ENCODE measurements at regions of chr14 and their contacts with region 1.

Region 1: GRCh38 chr14:74493343-74494261 is at the start of gene ISCA2:
- DNase-seq: peak; percentile 100
- H3K4me3 ChIP-seq: peak within 1 kb of the TSS; percentile 97
- H3K27ac ChIP-seq: peak within 1 kb of the TSS; percentile 84
- H3K4me1 ChIP-seq: peaks cover 23% of the 10 kb centered on the region
- H3K27me3 ChIP-seq: no peaks in the 10 kb centered on the region
- CTCF ChIP-seq: no peak
- total RNA-seq, gene ISCA2: 25.5 and 26.3 TPM in 2 replicates

Region 2: DNA sequence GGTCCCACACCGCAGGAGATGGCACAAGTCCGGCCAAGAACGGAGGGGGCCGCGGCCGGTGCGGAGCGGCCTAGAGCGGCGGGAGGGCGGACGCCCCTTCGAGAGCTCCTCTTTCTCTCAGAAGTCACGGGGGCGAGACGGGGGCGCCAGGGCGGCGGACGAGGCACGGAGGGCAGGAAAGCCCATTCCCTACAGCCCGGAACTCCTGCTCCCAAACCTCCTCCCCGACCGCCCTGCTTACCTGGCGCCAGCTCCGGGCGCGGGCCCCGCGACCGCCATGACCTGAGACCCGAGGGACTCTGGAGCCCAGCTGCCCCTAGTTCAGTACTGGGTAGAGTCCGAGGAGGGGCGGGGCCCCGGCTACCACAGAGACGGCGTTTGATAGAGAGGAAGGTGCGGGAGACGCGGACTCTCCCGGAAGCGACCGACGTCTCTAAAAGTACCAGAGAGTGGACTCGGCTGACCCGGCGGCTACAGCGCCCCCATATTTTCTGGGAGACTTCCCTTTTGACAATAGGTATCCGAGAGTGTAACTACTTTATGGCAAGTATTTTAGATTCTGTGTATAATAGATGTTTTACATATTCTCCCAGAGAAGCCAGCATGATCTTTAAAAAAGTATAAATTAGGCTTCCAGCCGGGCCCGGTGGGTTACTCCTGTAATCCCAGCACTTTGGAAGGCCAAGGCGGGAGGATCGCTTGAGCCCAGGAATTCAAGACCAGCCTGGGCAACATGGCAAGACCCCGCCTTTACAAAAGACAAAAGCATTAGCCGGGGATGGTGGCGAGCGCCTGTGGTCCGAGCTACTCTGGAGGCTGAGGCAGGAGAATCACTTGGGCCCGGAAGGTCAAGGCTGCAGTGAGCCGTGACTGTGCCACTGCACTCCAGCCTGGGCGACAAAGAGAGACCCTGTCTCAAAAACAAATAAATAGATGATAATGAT is 190.7 kb before region 1 on chr14 and contains the start of gene ABCD4:
- CTCF ChIA-PET with region 1: interaction called, 13 read pairs
- POLR2A ChIA-PET with region 1: no interaction called
- intact Hi-C with region 1: no loop called
- DNase-seq: peak; percentile 95
- H3K4me3 ChIP-seq: peak within 1 kb of the TSS; percentile 83
- H3K27ac ChIP-seq: peak within 1 kb of the TSS; percentile 81
- H3K4me1 ChIP-seq: peaks cover 5% of the 10 kb centered on the region
- H3K27me3 ChIP-seq: no peaks in the 10 kb centered on the region
- CTCF ChIP-seq: peak; percentile 82
- total RNA-seq, gene ABCD4: 46.7 and 55.7 TPM in 2 replicates

Region 3: GRCh38 chr14:74362361-74362915 is 131.2 kb before region 1 on chr14:
- CTCF ChIA-PET with region 1: no interaction called
- POLR2A ChIA-PET with region 1: no interaction called
- intact Hi-C with region 1: loop called (anchors 5 kb)
- DNase-seq: peak; percentile 84
- H3K4me3 ChIP-seq: no peak overlapping the region
- H3K27ac ChIP-seq: no peak overlapping the region
- H3K4me1 ChIP-seq: no peaks in the 10 kb centered on the region
- H3K27me3 ChIP-seq: peaks cover 9% of the 10 kb centered on the region
- CTCF ChIP-seq: peak; percentile 91

Region 4: GRCh38 chr14:74514471-74514941 is 20.9 kb after region 1 on chr14:
- CTCF ChIA-PET with region 1: no interaction called
- POLR2A ChIA-PET with region 1: no interaction called
- intact Hi-C with region 1: no loop called
- DNase-seq: no peak
- H3K4me3 ChIP-seq: no peak overlapping the region
- H3K27ac ChIP-seq: no peak overlapping the region
- H3K4me1 ChIP-seq: no peaks in the 10 kb centered on the region
- H3K27me3 ChIP-seq: peaks cover 7% of the 10 kb centered on the region
- CTCF ChIP-seq: no peak